Ovary (tissue), 10 donors: ENCODE measurements at regions of chr12 and their contacts with region 1.

Region 1: GRCh38 chr12:64610149-64610678 is at the start of gene RASSF3:
- DNase-seq: peak; percentile 68 to 81 (median 72)
- H3K4me3 ChIP-seq: peak within 1 kb of the TSS; percentile 86
- H3K27ac ChIP-seq: peak within 1 kb of the TSS; percentile 76 to 82
- H3K4me1 ChIP-seq: peaks cover 5% of the 10 kb centered on the region
- H3K27me3 ChIP-seq: no peaks in the 10 kb centered on the region
- CTCF ChIP-seq: no peak
- EP300 ChIP-seq: no peak
- POLR2A ChIP-seq: peak; percentile 38
- total RNA-seq, gene RASSF3: 20.3 to 64.5 (median 38.0) TPM

Region 2: GRCh38 chr12:62917926-62918325 is 1692.3 kb before region 1 on chr12:
- intact Hi-C with region 1: no loop called
- DNase-seq: no peak
- H3K4me3 ChIP-seq: no peak overlapping the region
- H3K27ac ChIP-seq: no peak overlapping the region
- H3K4me1 ChIP-seq: peaks cover 7% of the 10 kb centered on the region
- H3K27me3 ChIP-seq: no peaks in the 10 kb centered on the region
- CTCF ChIP-seq: no peak
- EP300 ChIP-seq: no peak
- POLR2A ChIP-seq: no peak

Region 3: DNA sequence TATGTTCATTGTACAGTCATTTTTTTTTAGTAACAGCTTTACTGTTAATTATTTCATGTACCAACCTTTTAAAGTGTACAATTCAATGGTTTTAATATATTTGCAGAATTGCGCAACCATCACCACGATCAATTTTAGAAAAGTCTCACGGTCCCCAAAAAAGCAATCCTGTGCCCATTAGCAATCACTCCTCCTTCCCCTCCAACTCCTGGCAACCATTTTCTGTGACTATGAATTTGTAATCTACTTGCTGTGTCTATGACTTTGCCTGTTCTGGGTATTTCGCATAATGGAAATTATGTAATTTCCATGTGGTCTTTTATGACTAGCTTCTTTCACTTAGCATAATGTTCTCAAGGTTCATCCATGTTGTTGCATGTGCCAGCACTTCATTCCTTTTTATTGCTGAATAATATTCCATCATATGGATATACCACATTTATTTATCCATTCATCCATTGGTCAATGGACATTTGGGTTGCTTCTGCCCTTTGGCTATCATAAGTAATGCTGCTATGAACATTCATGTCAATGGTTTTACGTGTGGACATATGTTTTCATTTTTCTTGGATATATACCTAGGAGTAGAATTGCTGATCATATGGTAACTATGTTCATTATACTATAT is 398.0 kb before region 1 on chr12:
- intact Hi-C with region 1: no loop called
- DNase-seq: no peak
- H3K4me3 ChIP-seq: no peak overlapping the region
- H3K27ac ChIP-seq: no peak overlapping the region
- H3K4me1 ChIP-seq: no peaks in the 10 kb centered on the region
- H3K27me3 ChIP-seq: no peaks in the 10 kb centered on the region
- CTCF ChIP-seq: no peak
- EP300 ChIP-seq: no peak
- POLR2A ChIP-seq: no peak

Region 4: GRCh38 chr12:64494998-64495729 is 115.0 kb before region 1 on chr12:
- intact Hi-C with region 1: no loop called
- DNase-seq: no peak
- H3K4me3 ChIP-seq: no peak overlapping the region
- H3K27ac ChIP-seq: no peak overlapping the region
- H3K4me1 ChIP-seq: no peaks in the 10 kb centered on the region
- H3K27me3 ChIP-seq: no peaks in the 10 kb centered on the region
- CTCF ChIP-seq: no peak
- EP300 ChIP-seq: no peak
- POLR2A ChIP-seq: no peak

Region 5: DNA sequence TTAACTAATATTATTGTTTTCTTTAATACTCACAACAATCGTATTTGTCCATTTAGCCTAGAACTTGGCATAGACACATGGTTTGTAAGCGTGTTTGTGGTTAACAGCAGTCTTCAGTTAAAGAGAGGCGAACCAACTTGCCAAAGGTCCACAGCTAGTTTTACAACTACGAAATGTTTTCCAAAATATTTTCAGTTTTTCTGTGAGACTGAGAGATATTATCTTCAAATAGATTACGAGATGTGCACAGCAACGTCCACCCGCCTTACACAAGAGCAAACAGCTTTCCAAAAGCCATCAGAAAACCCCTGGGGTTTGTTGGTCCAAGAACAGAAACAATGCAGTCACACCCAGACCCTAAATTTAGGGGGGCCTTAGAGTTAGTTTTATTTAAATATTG is 58.5 kb before region 1 on chr12:
- intact Hi-C with region 1: loop called in 1 of 4 experiments (anchors 10 kb)
- DNase-seq: no peak
- H3K4me3 ChIP-seq: no peak overlapping the region
- H3K27ac ChIP-seq: peak overlapping the region in 1 of 2 donors; percentile 37
- H3K4me1 ChIP-seq: peaks cover 2% of the 10 kb centered on the region
- H3K27me3 ChIP-seq: no peaks in the 10 kb centered on the region
- CTCF ChIP-seq: no peak
- EP300 ChIP-seq: no peak
- POLR2A ChIP-seq: no peak

Region 6: DNA sequence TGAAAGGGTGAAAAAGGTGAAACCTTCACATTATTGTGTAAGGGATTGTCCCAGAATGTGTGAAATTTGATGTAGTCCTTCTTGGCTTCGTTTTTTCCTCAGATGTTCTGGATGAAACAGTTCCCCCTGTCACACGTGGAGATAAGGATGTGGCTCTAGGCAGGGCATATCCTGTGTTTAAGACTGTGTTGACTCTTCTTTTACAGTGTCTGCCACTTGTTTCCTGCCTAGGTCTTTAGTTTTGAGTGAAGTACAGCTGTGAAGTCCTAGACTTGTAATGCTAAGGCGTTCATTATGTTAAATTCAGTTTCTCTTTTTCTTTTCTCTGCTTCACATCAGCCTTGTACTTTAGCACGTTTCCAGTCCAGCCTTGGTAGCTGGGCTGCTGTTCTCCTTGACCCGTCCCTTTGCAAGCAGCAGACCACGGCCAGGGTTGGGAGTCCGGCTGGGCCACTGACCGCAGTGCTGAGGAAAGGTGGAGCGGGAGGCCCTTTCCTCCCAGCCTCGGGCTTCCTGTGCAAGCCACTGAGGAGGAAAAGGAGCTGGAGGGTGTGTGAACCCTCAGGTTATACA is 59.1 kb after region 1 on chr12:
- intact Hi-C with region 1: loop called in 2 of 4 experiments (anchors 10 kb)
- DNase-seq: peak; percentile 50 to 78 (median 69)
- H3K4me3 ChIP-seq: no peak overlapping the region
- H3K27ac ChIP-seq: peak overlapping the region; percentile 48 to 62
- H3K4me1 ChIP-seq: peaks cover 34% of the 10 kb centered on the region
- H3K27me3 ChIP-seq: no peaks in the 10 kb centered on the region
- CTCF ChIP-seq: no peak
- EP300 ChIP-seq: no peak
- POLR2A ChIP-seq: no peak

Region 7: DNA sequence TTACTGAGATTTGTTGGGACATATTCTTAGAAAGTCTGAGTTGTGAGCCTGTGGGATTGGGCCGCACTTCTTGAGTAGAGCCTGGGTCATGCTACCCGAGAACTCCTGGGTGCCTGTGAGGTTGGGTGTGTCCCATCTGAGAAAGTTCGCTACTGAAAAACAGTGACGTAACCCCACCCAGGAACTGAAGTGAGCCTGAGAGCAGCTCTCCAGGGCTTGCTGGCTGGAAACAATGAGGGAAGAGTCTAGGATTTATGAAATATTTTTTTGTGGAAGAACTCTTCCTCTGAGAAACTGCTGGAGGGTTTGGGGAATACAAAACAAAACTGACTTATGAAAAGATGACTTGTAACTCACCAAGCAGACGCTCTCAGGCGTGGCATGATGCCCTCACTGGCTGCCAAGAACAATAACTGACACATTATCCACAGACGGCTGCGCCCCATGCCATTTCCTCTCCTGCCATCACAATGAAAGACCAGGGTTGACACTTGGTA is 69.3 kb after region 1 on chr12:
- intact Hi-C with region 1: loop called in 3 of 4 experiments (anchors 5 to 10 kb)
- DNase-seq: peak; percentile 41 to 70 (median 59)
- H3K4me3 ChIP-seq: peak overlapping the region; percentile 2
- H3K27ac ChIP-seq: peak overlapping the region; percentile 36 to 76
- H3K4me1 ChIP-seq: peaks cover 15% of the 10 kb centered on the region
- H3K27me3 ChIP-seq: no peaks in the 10 kb centered on the region
- CTCF ChIP-seq: no peak
- EP300 ChIP-seq: no peak
- POLR2A ChIP-seq: no peak

Region 8: GRCh38 chr12:64687816-64688215 is 77.6 kb after region 1 on chr12:
- intact Hi-C with region 1: loop called in 3 of 4 experiments (anchors 5 to 10 kb)
- DNase-seq: no peak
- H3K4me3 ChIP-seq: no peak overlapping the region
- H3K27ac ChIP-seq: peak overlapping the region in 1 of 2 donors; percentile 27
- H3K4me1 ChIP-seq: peaks cover 5% of the 10 kb centered on the region
- H3K27me3 ChIP-seq: no peaks in the 10 kb centered on the region
- CTCF ChIP-seq: no peak
- EP300 ChIP-seq: no peak
- POLR2A ChIP-seq: no peak

Region 9: GRCh38 chr12:64696080-64696741 is 86.0 kb after region 1 on chr12:
- intact Hi-C with region 1: loop called in 1 of 4 experiments (anchors 5 kb)
- DNase-seq: no peak
- H3K4me3 ChIP-seq: no peak overlapping the region
- H3K27ac ChIP-seq: no peak overlapping the region
- H3K4me1 ChIP-seq: no peaks in the 10 kb centered on the region
- H3K27me3 ChIP-seq: no peaks in the 10 kb centered on the region
- CTCF ChIP-seq: peak; percentile 19 to 63 (median 22)
- EP300 ChIP-seq: no peak
- POLR2A ChIP-seq: no peak